Dorsolateral prefrontal cortex (tissue), 120 donors: ENCODE measurements at regions of chr3 and their contacts with region 1.

Region 1: DNA sequence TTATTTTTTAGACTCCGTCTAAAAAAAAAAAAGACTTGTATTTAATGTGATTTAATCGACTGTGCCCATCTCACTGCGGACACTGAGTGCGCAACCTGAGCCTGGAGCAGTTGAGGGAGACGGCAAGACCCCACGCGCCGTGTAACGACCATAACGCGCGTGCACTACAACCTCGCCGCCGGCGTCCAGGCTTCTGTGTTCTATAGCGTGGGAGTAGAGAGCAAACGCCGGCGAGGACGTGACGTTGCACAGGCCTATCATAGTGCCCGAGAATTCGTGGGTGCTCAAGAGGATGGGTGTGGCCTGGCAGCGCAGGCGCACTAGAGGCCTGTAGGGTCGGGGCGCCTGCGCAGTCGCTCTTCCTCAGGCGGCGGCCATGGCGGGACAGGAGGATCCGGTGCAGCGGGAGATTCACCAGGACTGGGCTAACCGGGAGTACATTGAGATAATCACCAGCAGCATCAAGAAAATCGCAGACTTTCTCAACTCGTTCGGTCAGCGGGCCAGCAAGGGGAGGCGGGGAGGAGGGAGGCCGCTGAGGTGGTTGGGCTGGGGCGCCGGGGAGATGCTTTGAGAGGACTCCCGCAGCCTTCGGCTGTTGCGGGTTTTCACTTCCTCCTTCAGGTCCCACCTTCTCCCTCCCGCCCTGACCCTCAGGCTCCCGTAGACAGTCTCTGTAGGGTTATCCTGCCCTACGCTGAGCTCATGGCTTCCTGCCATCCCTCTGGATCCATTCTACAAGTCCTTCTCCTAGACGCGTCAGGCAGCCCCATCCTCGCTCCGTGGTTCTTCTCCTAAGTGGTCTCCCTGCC is at the start of gene BRK1:
- DNase-seq: peak; percentile 90 to 97 (median 96)
- H3K4me3 ChIP-seq: peak within 1 kb of the TSS; percentile 70 to 100 (median 95)
- H3K27ac ChIP-seq: peak within 1 kb of the TSS in 57 of 59 donors; percentile 29 to 97 (median 85)
- H3K27me3 ChIP-seq: no peaks in the 10 kb centered on the region
- CTCF ChIP-seq: peak in 42 of 56 donors; percentile 8 to 56 (median 30)
- total RNA-seq, gene BRK1: 62.8 to 136 (median 102) TPM

Region 2: GRCh38 chr3:9932843-9933560 is 182.5 kb before region 1 on chr3:
- intact Hi-C with region 1: loop called in 1 of 2 experiments (anchors 10 kb)
- DNase-seq: peak; percentile 55 to 88 (median 77)
- H3K4me3 ChIP-seq: peak overlapping the region; percentile 55 to 97 (median 87)
- H3K27ac ChIP-seq: peak overlapping the region; percentile 77 to 98 (median 93)
- H3K27me3 ChIP-seq: no peaks in the 10 kb centered on the region
- CTCF ChIP-seq: peak; percentile 31 to 83 (median 67)

Region 3: GRCh38 chr3:10142707-10143566 is 27.4 kb after region 1 on chr3:
- intact Hi-C with region 1: loop called in 1 of 2 experiments (anchors 2 kb)
- DNase-seq: no peak
- H3K4me3 ChIP-seq: peak overlapping the region; percentile 53 to 97 (median 88)
- H3K27ac ChIP-seq: peak overlapping the region in 14 of 59 donors; percentile 41 to 94 (median 90)
- H3K27me3 ChIP-seq: no peaks in the 10 kb centered on the region
- CTCF ChIP-seq: no peak

Region 4: DNA sequence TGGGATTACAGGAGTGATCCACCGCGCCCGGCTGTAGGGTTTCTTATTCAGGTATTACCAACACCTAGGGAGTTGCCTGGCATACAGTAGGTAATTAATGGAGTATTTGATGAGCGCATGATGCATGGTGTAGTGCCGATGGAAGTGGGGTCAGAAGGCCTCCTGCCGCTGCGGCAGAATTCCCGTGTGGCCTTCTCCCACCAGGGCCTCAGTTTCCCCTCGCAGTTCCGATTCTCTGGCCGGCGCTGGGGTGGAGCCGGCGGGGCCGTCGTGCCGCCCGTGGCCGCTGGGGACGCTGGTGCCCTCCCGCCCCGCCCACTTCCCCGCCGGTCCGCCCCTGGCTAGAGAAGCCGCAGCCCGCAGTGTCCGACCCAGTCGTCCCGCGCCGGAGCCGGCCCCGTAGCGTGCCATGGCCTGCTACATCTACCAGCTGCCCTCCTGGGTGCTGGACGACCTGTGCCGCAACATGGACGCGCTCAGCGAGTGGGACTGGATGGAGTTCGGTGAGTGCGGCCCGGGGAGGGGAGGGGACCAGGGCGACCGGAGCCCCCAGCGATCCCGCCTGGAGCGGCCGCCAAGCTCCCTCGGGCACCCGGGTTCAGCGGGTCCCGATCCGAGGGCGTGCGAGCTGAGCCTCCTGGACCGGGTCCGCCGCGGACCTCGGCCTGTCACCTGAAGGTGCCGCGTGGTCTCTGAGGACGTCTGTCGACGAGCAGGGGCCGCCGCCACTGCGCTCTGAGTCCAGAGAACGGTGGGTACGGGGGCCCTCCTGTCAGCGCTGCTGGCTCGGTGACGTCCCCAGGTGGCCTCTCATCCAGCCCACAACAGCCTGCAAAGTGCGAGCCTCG is 49.2 kb after region 1 on chr3 and contains the start of gene IRAK2:
- intact Hi-C with region 1: loop called in 1 of 2 experiments (anchors 10 kb)
- DNase-seq: peak; percentile 56 to 79 (median 67)
- H3K4me3 ChIP-seq: peak within 1 kb of the TSS; percentile 58 to 98 (median 91)
- H3K27ac ChIP-seq: peak within 1 kb of the TSS in 58 of 59 donors; percentile 2 to 95 (median 85)
- H3K27me3 ChIP-seq: no peaks in the 10 kb centered on the region
- CTCF ChIP-seq: peak; percentile 45 to 96 (median 90)
- total RNA-seq, gene IRAK2: 3.6 to 16.8 (median 6.7) TPM